Activated CD4-positive, alpha-beta T cell treated with anti-CD3 and anti-CD28 coated beads for 36 hours (primary cell): ENCODE measurements at regions of chr16 and their contacts with region 1.

Region 1: GRCh38 chr16:75415169-75415905 is 18.0 kb downstream of the CFDP1 start:
- DNase-seq: no peak
- ATAC-seq: peak; percentile 93
- H3K4me3 Mint-ChIP-seq: no peak overlapping the region
- H3K27ac Mint-ChIP-seq: peak overlapping the region; percentile 55
- H3K4me1 Mint-ChIP-seq: peaks cover 24% of the 10 kb centered on the region
- H3K27me3 Mint-ChIP-seq: no peaks in the 10 kb centered on the region

Region 2: GRCh38 chr16:75402821-75403475 is 12.4 kb before region 1 on chr16:
- CTCF ChIA-PET with region 1: interaction called, 10 read pairs
- POLR2A ChIA-PET with region 1: no interaction called
- intact Hi-C with region 1: no loop called
- DNase-seq: no peak
- ATAC-seq: peak; percentile 76
- H3K4me3 Mint-ChIP-seq: no peak overlapping the region
- H3K27ac Mint-ChIP-seq: peak overlapping the region; percentile 19
- H3K4me1 Mint-ChIP-seq: peaks cover 17% of the 10 kb centered on the region
- H3K27me3 Mint-ChIP-seq: no peaks in the 10 kb centered on the region

Region 3: GRCh38 chr16:75534560-75535205 is 119.3 kb after region 1 on chr16:
- CTCF ChIA-PET with region 1: no interaction called
- POLR2A ChIA-PET with region 1: no interaction called
- intact Hi-C with region 1: no loop called
- DNase-seq: no peak
- ATAC-seq: no peak
- H3K4me3 Mint-ChIP-seq: no peak overlapping the region
- H3K27ac Mint-ChIP-seq: no peak overlapping the region
- H3K4me1 Mint-ChIP-seq: no peaks in the 10 kb centered on the region
- H3K27me3 Mint-ChIP-seq: no peaks in the 10 kb centered on the region